Endothelial cell of umbilical vein (primary cell): ENCODE measurements at regions of chr19 and their contacts with region 1.

Region 1: GRCh38 chr19:45059278-45059965 is 16.9 kb downstream of the ZNF296 start:
- DNase-seq: peak; percentile 75
- H3K4me3 ChIP-seq: no peak overlapping the region
- H3K27ac ChIP-seq: no peak overlapping the region
- H3K4me1 ChIP-seq: no peaks in the 10 kb centered on the region
- H3K27me3 ChIP-seq: no peaks in the 10 kb centered on the region
- CTCF ChIP-seq: peak; percentile 80 to 84
- POLR2A ChIP-seq: peak; percentile 31

Region 2: DNA sequence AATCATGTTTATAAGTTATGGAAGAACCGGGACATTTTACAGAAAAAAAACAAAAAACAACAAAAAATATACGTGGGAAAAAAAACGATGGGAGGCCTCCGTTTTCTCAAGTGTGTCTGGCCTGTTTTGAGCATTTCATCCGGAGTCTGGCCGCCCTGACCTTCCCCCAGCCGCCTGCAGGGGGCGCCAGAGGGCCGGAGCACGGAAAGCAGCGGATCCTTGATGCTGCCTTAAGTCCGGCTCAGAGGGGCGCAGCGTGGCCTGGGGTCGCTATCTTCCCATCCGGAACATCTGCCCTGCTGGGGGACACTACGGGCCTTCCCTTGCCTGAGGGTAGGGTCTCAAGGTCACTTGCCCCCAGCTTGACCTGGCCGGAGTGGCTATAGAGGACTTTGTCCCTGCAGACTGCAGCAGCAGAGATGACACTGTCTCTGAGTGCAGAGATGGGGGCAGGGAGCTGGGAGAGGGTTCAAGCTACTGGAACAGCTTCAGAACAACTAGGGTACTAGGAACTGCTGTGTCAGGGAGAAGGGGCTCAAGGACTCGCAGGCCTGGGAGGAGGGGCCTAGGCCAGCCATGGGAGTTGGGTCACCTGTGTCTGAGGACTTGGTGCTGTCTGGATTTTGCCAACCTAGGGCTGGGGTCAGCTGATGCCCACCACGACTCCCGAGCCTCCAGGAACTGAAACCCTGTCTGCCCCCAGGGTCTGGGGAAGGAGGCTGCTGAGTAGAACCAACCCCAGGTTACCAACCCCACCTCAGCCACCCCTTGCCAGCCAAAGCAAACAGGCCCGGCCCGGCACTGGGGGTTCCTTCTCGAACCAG is 155.6 kb before region 1 on chr19:
- CTCF ChIA-PET with region 1: interaction called, 18 read pairs
- POLR2A ChIA-PET with region 1: no interaction called
- dilution Hi-C with region 1: no loop called
- intact Hi-C with region 1: no loop called
- DNase-seq: peak; percentile 73
- H3K4me3 ChIP-seq: no peak overlapping the region
- H3K27ac ChIP-seq: no peak overlapping the region
- H3K4me1 ChIP-seq: peaks cover 5% of the 10 kb centered on the region
- H3K27me3 ChIP-seq: peaks cover 9 to 11% of the 10 kb centered on the region in 2 experiments
- CTCF ChIP-seq: peak; percentile 98 to 99
- POLR2A ChIP-seq: peak; percentile 7

Region 3: DNA sequence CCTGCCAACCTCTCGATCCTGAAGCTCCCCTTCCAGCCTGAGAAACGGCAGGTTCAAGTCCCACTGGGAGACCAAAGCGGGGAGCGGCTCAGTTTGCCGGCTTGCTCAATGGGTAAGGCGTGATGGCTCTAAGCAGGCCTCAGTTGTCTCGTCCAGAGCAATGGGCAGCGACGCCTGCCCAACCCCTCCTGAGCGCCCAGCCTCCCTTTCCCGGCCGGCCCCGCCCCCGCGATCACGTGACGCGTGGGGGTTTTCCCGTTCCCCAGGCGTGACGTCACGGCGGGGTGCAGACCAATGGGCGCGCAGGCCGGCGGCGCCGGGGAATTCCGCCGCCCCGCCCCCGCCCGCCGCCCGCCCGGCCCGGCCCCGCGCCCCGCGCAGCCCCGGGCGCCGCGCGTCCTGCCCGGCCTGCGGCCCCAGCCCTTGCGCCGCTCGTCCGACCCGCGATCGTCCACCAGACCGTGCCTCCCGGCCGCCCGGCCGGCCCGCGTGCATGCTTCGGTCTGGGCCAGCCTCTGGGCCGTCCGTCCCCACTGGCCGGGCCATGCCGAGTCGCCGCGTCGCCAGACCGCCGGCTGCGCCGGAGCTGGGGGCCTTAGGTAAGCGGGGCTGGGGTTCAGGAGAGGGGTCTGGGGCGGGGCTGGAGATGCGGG is 58.2 kb before region 1 on chr19 and contains the start of gene RELB:
- CTCF ChIA-PET with region 1: interaction called, 14 read pairs
- POLR2A ChIA-PET with region 1: no interaction called
- dilution Hi-C with region 1: no loop called
- intact Hi-C with region 1: no loop called
- DNase-seq: peak; percentile 85
- H3K4me3 ChIP-seq: peak within 1 kb of the TSS; percentile 60 to 80 (median 68)
- H3K27ac ChIP-seq: peak within 1 kb of the TSS; percentile 96
- H3K4me1 ChIP-seq: peaks cover 8% of the 10 kb centered on the region
- H3K27me3 ChIP-seq: no peaks in the 10 kb centered on the region
- CTCF ChIP-seq: no peak
- POLR2A ChIP-seq: no peak
- total RNA-seq, gene RELB: 10.5 and 13.2 TPM in 2 replicates

Region 4: DNA sequence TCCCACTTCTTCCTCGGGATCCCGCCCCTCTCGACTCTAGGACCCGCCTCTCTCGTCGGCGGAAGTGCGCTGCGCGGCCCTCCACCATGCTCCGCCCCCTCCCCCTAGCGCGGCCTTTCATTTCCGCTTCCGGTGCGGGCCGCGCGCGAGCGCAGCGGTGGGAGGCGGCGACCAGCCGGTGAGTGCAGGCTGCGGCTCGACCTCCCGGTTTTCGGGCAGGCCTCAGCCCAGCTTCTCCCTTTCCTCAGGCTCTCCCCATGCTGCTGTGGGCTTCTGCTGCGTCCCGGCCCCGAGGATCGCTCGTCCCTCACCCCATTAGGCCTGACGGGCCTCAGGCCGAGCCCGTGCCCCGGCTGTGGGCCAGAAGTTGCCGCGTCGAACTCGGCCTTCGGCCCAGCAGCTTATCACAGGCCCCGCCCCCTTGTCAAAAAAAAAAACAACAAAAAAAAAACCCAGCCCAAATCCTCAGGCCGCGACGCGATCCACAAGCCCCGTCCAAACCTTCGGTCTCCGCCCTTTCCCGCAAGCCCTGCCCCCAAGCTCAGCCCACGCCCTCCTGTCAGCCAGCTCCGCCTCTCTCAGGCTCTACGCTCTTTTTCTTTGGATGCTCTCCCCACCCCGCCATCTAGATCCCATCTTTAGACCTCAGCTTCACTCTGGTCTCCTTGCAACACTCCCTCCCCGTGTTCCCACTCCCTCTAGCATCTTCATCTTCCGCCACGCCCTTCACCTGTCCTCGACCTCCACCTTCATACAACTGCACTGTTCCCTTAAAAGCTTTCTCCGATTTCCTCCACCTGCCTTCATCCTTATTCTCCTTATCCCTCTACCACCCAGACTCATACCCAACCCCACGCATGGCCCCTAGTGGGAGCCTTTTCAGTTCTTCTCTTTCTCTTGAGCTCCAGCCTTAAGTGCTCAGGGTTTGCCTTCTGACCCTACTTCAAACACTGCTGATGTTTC is 20.2 kb before region 1 on chr19 and contains the start of gene CLASRP:
- CTCF ChIA-PET with region 1: interaction called, 23 read pairs
- POLR2A ChIA-PET with region 1: no interaction called
- dilution Hi-C with region 1: no loop called
- intact Hi-C with region 1: no loop called
- DNase-seq: peak; percentile 85
- H3K4me3 ChIP-seq: peak within 1 kb of the TSS; percentile 55 to 95 (median 69)
- H3K27ac ChIP-seq: peak within 1 kb of the TSS; percentile 74
- H3K4me1 ChIP-seq: peaks cover 11% of the 10 kb centered on the region
- H3K27me3 ChIP-seq: no peaks in the 10 kb centered on the region
- CTCF ChIP-seq: no peak
- POLR2A ChIP-seq: peak; percentile 91
- total RNA-seq, gene CLASRP: 70.7 and 77.0 TPM in 2 replicates

Region 5: DNA sequence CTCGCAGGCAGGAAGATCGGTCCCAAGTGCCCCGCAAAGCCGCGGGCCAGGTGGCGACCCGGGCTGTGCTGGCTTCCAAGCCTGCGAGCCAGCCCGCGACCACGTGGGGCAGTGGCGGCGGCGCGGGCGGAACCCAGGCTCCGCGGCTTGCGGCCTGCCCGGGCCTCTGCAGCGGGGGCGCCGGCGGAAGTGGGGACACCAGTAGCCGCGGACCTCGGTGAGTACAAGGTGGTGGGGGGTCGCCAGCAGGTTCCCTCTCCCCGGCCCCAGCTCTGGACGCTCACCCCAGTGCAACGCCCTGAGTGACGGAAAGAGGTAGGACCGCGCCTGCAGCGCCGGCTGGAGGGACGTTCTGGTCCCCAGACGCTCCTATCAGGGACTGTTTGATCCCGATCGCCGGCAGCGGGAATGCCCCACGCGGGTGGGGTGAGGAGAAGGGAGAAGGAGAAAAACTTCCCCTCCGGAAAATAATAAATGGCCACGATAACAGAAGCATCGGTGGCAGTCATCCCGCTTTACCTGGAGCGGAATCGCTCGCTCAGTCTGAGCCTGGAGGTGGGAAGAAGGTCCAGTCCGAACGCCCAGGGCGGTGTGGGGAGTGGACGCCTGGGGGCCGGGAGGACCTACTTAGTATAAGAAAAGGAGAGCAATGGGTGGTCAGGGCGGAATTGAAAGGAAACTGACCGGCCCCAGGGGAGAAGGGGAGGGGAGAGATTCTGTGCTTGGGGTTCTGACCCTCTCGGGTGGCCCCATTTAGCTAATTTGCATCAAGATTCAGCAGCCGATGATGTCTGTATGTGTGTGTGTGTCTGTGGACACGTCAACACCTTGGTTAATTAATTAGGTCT is 19.9 kb after region 1 on chr19 and contains the start of gene GEMIN7:
- CTCF ChIA-PET with region 1: interaction called, 10 read pairs
- POLR2A ChIA-PET with region 1: no interaction called
- dilution Hi-C with region 1: no loop called
- intact Hi-C with region 1: no loop called
- DNase-seq: peak; percentile 75
- H3K4me3 ChIP-seq: peak within 1 kb of the TSS; percentile 57 to 79 (median 58)
- H3K27ac ChIP-seq: peak within 1 kb of the TSS; percentile 50
- H3K4me1 ChIP-seq: peaks cover 16% of the 10 kb centered on the region
- H3K27me3 ChIP-seq: no peaks in the 10 kb centered on the region
- CTCF ChIP-seq: peak in 1 of 2 donors; percentile 6
- POLR2A ChIP-seq: no peak
- total RNA-seq, gene GEMIN7: 30.3 and 34.2 TPM in 2 replicates